ENCODE measurements at regions of chr1 and their contacts with region 1.

Region 1: DNA sequence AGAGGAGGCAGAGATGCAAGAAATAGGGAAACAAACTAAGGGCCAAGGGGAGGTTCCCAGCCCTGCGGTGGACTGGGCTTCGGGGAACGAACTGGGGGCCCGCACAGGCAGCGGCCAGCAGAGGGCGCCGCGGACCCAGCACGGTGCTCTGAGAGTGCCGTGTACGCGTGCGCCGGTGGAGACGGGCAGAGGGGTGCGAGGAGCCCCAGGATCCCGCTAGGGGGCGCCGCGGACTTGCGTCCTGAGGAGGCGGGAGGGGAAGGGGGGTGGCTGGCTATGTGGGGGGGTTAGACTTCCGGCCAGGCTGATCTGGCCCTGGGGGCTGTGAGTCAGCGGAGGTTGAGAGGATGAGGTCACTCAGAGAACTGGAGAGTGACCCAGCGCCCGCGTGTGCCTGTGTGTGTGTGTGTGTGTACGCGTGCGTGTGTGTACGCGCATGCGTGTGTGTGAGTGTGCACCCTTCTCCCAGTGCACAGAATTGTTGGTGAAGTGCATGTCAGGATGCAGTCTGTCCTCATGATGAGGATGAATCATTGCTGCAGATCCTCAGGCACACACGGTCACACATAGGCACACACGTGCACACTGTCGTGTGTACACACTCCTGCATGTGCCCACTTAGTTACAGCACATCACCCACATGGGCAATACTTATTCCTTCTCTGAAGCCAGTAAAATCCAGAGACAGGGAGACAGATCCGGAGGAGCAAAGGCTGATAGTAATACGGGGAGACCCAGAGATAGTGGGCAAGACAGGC is 17.0 kb downstream of the NES start:
- DNase-seq: peak; percentile 96
- H3K4me3 ChIP-seq: peak overlapping the region; percentile 54
- H3K27ac ChIP-seq: peak overlapping the region; percentile 96
- H3K4me1 ChIP-seq: peaks cover 82% of the 10 kb centered on the region
- H3K27me3 ChIP-seq: peaks cover 24% of the 10 kb centered on the region
- CTCF ChIP-seq: peak; percentile 97

Region 2: DNA sequence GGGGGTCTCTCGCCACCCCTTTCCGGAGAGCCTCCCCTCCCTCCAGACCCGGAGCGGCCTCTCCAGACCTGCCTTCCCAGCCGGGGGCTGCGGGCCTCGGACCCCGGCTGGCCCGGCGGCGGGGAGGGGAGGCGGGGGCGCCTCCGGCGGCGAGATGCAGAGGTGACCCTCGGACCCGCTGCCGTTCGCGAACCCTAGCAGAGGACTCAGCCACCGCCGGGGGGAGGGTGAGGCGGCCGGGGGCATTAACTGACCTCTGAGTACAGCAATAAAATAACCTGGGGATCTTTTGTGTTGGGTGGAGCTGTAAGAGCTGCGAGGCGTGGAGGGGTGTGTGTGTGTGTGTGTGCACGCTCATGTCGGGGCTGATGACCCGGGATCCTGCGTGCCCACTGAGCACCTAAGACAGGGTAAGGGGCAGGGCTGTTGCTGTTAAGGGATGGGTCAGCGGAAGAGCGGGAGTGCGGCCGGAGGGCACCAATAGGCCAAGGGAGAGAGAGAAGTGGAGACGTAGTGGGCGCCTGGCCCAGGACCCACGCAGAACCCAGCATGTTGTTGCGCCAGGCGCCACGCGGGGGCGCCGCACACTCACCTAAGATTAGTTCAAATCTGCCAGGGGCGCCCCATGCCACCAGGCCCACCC is 34.6 kb before region 1 on chr1:
- intact Hi-C with region 1: loop called (anchors 2 kb)
- DNase-seq: peak; percentile 52
- H3K4me3 ChIP-seq: peak overlapping the region; percentile 63
- H3K27ac ChIP-seq: peak overlapping the region; percentile 79
- H3K4me1 ChIP-seq: peaks cover 35% of the 10 kb centered on the region
- H3K27me3 ChIP-seq: peaks cover 83% of the 10 kb centered on the region
- CTCF ChIP-seq: peak; percentile 83

Region 3: GRCh38 chr1:156677616-156678596 is 17.7 kb after region 1 on chr1:
- intact Hi-C with region 1: loop called (anchors 2 kb)
- DNase-seq: peak; percentile 74
- H3K4me3 ChIP-seq: peak overlapping the region; percentile 90
- H3K27ac ChIP-seq: peak overlapping the region; percentile 96
- H3K4me1 ChIP-seq: peaks cover 49% of the 10 kb centered on the region
- H3K27me3 ChIP-seq: peaks cover 11% of the 10 kb centered on the region
- CTCF ChIP-seq: peak; percentile 89